Cardiac septum (tissue), 1 donor: ENCODE measurements at regions of chr17 and their contacts with region 1.

Region 1: DNA sequence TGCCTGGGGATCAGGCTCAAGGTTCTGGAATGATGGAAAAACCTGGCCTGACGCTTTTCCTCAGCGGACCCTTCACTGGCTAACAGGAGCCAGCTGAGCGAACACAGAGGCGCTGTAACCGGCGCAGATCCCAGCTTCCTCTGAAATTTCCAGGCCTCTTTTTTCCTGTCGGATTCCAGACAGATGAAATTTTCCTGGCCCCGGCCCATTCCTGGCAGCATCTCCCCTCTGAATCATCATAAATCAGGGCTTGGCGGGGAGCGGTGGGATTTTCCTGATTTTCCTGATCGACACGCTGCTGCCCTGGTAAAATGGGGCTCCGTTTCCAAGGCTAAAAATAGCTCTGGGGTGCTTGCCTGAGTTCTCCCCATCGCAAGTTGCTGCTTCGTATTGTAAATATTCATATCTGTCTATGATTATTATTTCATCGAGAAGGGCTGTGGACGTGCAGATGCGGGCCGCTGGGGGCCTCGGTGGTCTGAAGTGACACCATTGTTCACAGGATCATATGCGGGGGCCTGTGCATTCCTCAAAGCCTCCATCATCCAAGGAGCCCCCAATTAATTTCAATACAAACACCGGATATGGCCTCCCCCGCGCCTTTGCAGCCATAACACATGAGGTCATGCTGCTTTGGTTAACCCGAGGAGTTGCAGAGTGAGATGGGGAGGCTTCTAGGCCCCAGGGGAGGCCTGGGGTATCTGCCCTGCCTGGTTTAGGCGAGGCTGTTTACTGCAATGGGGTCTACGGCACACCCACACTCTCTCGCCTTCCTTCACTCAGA is 45.8 kb upstream of the ETV4 start:
- DNase-seq: peak; percentile 88

Region 2: GRCh38 chr17:43661699-43662412 is 69.9 kb after region 1 on chr17 and contains the start of gene MEOX1:
- intact Hi-C with region 1: loop called (anchors 2 kb)
- DNase-seq: no peak
- total RNA-seq, gene MEOX1: 19.8 TPM